Activated CD8-positive, alpha-beta T cell treated with anti-CD3 and anti-CD28 coated beads, Interleukin-2, amount 10 ng/mL, durations not matched to agents 7 days and 5 days (primary cell): ENCODE measurements at regions of chr1 and their contacts with region 1.

Region 1: GRCh38 chr1:168439456-168440375 is 104.1 kb downstream of the XCL2 start:
- DNase-seq: peak; percentile 96
- ATAC-seq: peak; percentile 86
- H3K4me3 Mint-ChIP-seq: peak overlapping the region; percentile 47
- H3K27ac Mint-ChIP-seq: peak overlapping the region; percentile 82
- H3K4me1 Mint-ChIP-seq: peaks cover 65% of the 10 kb centered on the region
- H3K27me3 Mint-ChIP-seq: no peaks in the 10 kb centered on the region

Region 2: DNA sequence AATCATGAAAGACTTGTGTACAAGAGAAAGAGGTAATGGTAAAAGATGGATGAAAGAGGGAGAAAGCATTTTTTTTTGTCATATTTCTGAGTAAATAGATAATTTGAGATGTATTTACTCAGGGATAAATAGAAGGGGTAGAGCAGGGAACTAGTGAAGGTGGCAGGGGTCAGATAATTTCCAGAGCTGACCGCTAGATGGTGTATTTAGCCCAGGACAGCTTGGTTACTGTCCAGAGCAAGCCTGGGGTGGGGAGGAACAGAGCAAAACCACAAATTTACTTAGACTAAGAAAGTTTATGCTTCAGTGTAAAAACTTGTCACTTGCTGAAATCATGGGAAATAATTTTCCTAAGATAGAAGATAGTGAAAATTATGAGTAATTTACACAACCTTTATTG is 12.6 kb after region 1 on chr1:
- CTCF ChIA-PET with region 1: interaction called, 13 read pairs
- POLR2A ChIA-PET with region 1: interaction called, 3 read pairs
- DNase-seq: no peak
- ATAC-seq: no peak
- H3K4me3 Mint-ChIP-seq: no peak overlapping the region
- H3K27ac Mint-ChIP-seq: peak overlapping the region; percentile 69
- H3K4me1 Mint-ChIP-seq: peaks cover 57% of the 10 kb centered on the region
- H3K27me3 Mint-ChIP-seq: no peaks in the 10 kb centered on the region

Region 3: GRCh38 chr1:168509875-168510791 is 70.4 kb after region 1 on chr1:
- CTCF ChIA-PET with region 1: interaction called, 11 read pairs
- POLR2A ChIA-PET with region 1: interaction called, 4 read pairs
- DNase-seq: peak; percentile 57
- ATAC-seq: peak; percentile 35
- H3K4me3 Mint-ChIP-seq: peak overlapping the region; percentile 1
- H3K27ac Mint-ChIP-seq: peak overlapping the region; percentile 94
- H3K4me1 Mint-ChIP-seq: peaks cover 95% of the 10 kb centered on the region
- H3K27me3 Mint-ChIP-seq: no peaks in the 10 kb centered on the region

Region 4: GRCh38 chr1:168535536-168535935 is 95.8 kb after region 1 on chr1:
- CTCF ChIA-PET with region 1: interaction called, 26 read pairs
- POLR2A ChIA-PET with region 1: interaction called, 4 read pairs
- DNase-seq: peak; percentile 75
- ATAC-seq: peak; percentile 89
- H3K4me3 Mint-ChIP-seq: peak overlapping the region; percentile 61
- H3K27ac Mint-ChIP-seq: peak overlapping the region; percentile 92
- H3K4me1 Mint-ChIP-seq: peaks cover 89% of the 10 kb centered on the region
- H3K27me3 Mint-ChIP-seq: no peaks in the 10 kb centered on the region